T-cell (primary cell): ENCODE measurements at regions of chr6 and their contacts with region 1.

Region 1: GRCh38 chr6:132669690-132670291 is 10.8 kb upstream of the TAAR1 start:
- DNase-seq: peak in 2 of 35 experiments; percentile 1 to 40
- ATAC-seq: peak in 2 of 4 experiments; percentile 38 to 42
- H3K4me3 ChIP-seq: no peak overlapping the region
- H3K4me3 Mint-ChIP-seq: no peak overlapping the region
- H3K27ac ChIP-seq: no peak overlapping the region
- H3K27ac Mint-ChIP-seq: no peak overlapping the region
- H3K4me1 ChIP-seq: peaks cover 0 to 2% of the 10 kb centered on the region in 2 experiments
- H3K4me1 Mint-ChIP-seq: peaks cover 0 to 4% (median 4%) of the 10 kb centered on the region in 3 donors
- H3K27me3 ChIP-seq: no peaks in the 10 kb centered on the region
- H3K27me3 Mint-ChIP-seq: peaks cover 6 to 7% of the 10 kb centered on the region in 2 donors

Region 2: DNA sequence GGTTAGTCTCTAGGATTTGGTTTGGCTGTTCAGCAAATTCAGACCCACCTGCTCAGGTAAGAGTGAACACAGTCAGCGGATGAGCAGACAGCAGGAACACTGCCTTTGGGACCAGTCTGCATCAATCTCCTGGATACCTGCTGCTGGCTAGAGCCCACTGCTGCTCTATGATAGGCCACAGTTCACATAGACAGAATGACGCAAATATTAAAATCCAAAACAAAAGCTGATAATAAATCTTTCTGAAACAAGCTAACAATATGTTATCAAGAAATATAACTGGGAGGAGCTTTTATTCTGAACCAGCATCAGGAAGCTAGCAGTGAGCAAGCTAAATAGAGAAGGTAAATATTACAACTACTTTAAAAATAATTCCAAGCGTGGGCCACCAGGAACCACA is 10.7 kb before region 1 on chr6 and contains the start of gene TAAR1:
- CTCF ChIA-PET with region 1: interaction called in 1 of 2 experiments, 12 read pairs
- POLR2A ChIA-PET with region 1: no interaction called
- DNase-seq: no peak
- ATAC-seq: no peak
- H3K4me3 ChIP-seq: no peak within 1 kb of the TSS
- H3K4me3 Mint-ChIP-seq: no peak within 1 kb of the TSS
- H3K27ac ChIP-seq: no peak within 1 kb of the TSS
- H3K27ac Mint-ChIP-seq: no peak within 1 kb of the TSS
- H3K4me1 ChIP-seq: no peaks in the 10 kb centered on the region
- H3K4me1 Mint-ChIP-seq: peaks cover 0 to 3% (median 0%) of the 10 kb centered on the region in 3 donors
- H3K27me3 ChIP-seq: no peaks in the 10 kb centered on the region
- H3K27me3 Mint-ChIP-seq: no peaks in the 10 kb centered on the region
- total RNA-seq, gene TAAR1: not detected